Calu3 (cell line): ENCODE measurements at regions of chr6 and their contacts with region 1.

Region 1: DNA sequence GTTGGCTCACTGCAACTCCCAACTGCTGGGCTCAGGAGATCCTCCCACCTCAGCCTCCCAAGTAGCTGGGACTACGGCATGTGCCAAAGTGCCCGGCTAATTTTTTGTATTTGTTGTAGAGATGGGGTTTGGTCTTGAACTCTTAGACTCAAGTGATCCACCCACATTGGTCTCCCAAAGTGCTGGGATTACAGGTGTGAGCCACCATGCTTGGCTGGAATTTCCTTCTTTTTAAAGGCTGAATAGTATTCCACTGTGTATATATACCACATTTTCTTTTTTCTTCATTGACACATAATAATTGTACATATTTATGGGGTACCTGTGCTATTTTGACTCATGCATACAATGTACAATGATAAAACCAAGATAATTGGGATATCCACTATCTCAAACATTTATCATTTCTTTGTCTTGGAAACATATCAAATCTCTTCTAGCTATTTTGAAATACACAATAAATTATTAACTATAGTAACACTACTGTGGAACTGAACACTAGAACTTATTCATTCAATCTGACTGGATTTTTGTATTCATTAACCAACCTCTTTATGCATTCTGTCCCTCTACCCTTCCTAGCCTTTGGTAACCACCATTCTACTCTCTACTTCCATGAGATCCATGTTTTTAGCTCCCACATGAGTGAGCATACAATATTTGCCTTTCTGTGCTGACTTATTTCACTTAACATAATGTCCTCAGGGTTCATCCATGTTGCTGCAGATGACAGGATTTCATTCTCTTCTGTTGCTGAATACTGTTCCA is 7.8 kb downstream of the MDC1 start:
- DNase-seq: no peak
- H3K4me3 Mint-ChIP-seq: no peak overlapping the region
- H3K27ac Mint-ChIP-seq: peak overlapping the region; percentile 38
- H3K4me1 Mint-ChIP-seq: peaks cover 50% of the 10 kb centered on the region
- H3K27me3 Mint-ChIP-seq: no peaks in the 10 kb centered on the region
- CTCF ChIP-seq: no peak

Region 2: DNA sequence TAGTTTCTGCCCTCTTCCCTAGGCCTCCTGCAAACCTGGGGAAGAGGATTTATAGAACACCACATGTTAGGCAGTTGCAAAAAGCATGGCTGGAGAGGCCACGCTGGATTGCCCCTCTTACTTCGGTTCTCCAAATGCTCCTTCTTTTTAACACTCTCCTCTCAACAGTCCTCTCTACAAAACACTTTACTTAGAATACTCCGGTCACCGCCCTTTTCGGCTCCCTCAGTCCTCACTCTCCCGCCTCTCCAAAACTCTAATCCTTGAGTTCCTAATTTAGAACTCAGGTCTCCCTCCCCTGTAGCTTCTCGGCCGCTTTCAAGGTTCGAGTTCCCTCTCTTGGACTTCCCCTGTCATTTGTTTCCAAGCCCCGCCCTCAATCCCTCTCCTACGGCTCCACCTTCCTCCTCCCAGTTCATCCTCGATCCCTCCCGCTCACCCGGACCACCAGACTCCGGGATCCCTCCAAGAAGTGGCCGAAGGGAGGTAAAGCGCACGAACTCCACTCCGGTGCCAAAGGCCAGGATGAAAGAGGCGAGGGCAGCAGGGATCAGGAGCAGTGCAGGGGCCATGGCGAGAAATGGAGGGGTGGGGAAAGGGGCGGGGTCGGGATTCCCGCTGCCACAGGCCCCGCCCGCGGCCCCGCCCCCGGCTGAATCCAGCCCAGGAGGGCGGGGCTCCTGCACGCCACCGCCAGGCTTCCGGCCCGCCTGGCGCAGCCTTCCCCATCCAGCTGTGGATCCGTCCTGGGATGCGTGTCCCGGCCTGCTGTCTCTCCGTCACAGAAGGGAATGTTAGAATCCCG is 18.7 kb before region 1 on chr6 and contains the start of gene NRM:
- CTCF ChIA-PET with region 1: interaction called, 4 read pairs
- intact Hi-C with region 1: loop called (anchors 2 kb)
- DNase-seq: peak; percentile 93
- H3K4me3 Mint-ChIP-seq: peak within 1 kb of the TSS; percentile 74
- H3K27ac Mint-ChIP-seq: peak within 1 kb of the TSS; percentile 38
- H3K4me1 Mint-ChIP-seq: peaks cover 67% of the 10 kb centered on the region
- H3K27me3 Mint-ChIP-seq: no peaks in the 10 kb centered on the region
- CTCF ChIP-seq: no peak
- total RNA-seq, gene NRM: 22.8 and 30.2 TPM in 2 replicates